ENCODE measurements at regions of chr17 and their contacts with region 1.

Region 1: GRCh38 chr17:64648234-64648633 is 13.9 kb downstream of the SMURF2 start:
- DNase-seq: no peak
- H3K4me3 Mint-ChIP-seq: no peak overlapping the region
- H3K27ac Mint-ChIP-seq: no peak overlapping the region
- H3K4me1 Mint-ChIP-seq: peaks cover 17% of the 10 kb centered on the region
- H3K27me3 Mint-ChIP-seq: no peaks in the 10 kb centered on the region

Region 2: GRCh38 chr17:64306850-64307463 is 341.3 kb before region 1 on chr17:
- intact Hi-C with region 1: loop called (anchors 5 kb)
- DNase-seq: peak; percentile 43
- H3K4me3 Mint-ChIP-seq: no peak overlapping the region
- H3K27ac Mint-ChIP-seq: no peak overlapping the region
- H3K4me1 Mint-ChIP-seq: peaks cover 5% of the 10 kb centered on the region
- H3K27me3 Mint-ChIP-seq: peaks cover 4% of the 10 kb centered on the region

Region 3: GRCh38 chr17:64320613-64321553 is 327.4 kb before region 1 on chr17:
- intact Hi-C with region 1: loop called (anchors 2 kb)
- DNase-seq: peak; percentile 26
- H3K4me3 Mint-ChIP-seq: no peak overlapping the region
- H3K27ac Mint-ChIP-seq: no peak overlapping the region
- H3K4me1 Mint-ChIP-seq: peaks cover 18% of the 10 kb centered on the region
- H3K27me3 Mint-ChIP-seq: peaks cover 25% of the 10 kb centered on the region

Region 4: GRCh38 chr17:64580384-64581315 is 67.6 kb before region 1 on chr17:
- intact Hi-C with region 1: loop called (anchors 2 kb)
- DNase-seq: no peak
- H3K4me3 Mint-ChIP-seq: no peak overlapping the region
- H3K27ac Mint-ChIP-seq: peak overlapping the region; percentile 94
- H3K4me1 Mint-ChIP-seq: peaks cover 13% of the 10 kb centered on the region
- H3K27me3 Mint-ChIP-seq: no peaks in the 10 kb centered on the region